ENCODE measurements at regions of chr4 and their contacts with region 1.

Region 1: GRCh38 chr4:55345980-55346850 is at the start of gene SRD5A3:
- DNase-seq: peak; percentile 80 to 85
- ATAC-seq: peak; percentile 89 to 95 (median 89)
- H3K4me3 ChIP-seq: peak within 1 kb of the TSS; percentile 77
- H3K4me3 Mint-ChIP-seq: peak within 1 kb of the TSS; percentile 94
- H3K27ac ChIP-seq: peak within 1 kb of the TSS; percentile 87
- H3K27ac Mint-ChIP-seq: peak within 1 kb of the TSS; percentile 82 to 87
- H3K4me1 ChIP-seq: peaks cover 9% of the 10 kb centered on the region
- H3K4me1 Mint-ChIP-seq: peaks cover 0 to 10% of the 10 kb centered on the region in 2 donors
- H3K27me3 ChIP-seq: no peaks in the 10 kb centered on the region
- H3K27me3 Mint-ChIP-seq: no peaks in the 10 kb centered on the region
- CTCF ChIP-seq: peak; percentile 99
- total RNA-seq, gene SRD5A3: 3.5 to 5.6 (median 4.5) TPM

Region 2: DNA sequence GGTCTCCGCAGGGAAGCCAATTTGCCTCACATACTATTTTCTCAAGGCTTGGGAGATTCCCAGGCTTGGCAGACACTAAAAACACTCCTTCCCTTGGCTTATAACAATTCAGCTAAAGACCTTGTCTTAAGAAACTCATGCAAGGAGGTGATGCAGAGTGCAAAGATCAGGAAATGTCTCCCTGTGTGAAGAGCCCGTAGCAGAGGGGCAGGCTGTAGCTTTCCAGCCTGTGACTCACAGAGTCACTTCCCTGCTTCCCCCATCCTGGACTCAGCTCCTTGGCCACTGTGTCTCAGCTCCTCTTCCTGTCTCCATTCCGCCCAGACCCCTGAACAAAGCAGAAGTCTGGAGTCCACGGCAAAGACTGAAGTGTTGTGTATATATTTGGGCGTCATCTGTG is 277.0 kb before region 1 on chr4:
- intact Hi-C with region 1: no loop called
- DNase-seq: no peak
- ATAC-seq: no peak
- H3K4me3 ChIP-seq: no peak overlapping the region
- H3K4me3 Mint-ChIP-seq: no peak overlapping the region
- H3K27ac ChIP-seq: no peak overlapping the region
- H3K27ac Mint-ChIP-seq: no peak overlapping the region
- H3K4me1 ChIP-seq: no peaks in the 10 kb centered on the region
- H3K4me1 Mint-ChIP-seq: no peaks in the 10 kb centered on the region
- H3K27me3 ChIP-seq: no peaks in the 10 kb centered on the region
- H3K27me3 Mint-ChIP-seq: peaks cover 0 to 3% of the 10 kb centered on the region in 2 donors
- CTCF ChIP-seq: no peak

Region 3: GRCh38 chr4:55395529-55396307 is 49.5 kb after region 1 on chr4 and contains the start of gene TMEM165:
- intact Hi-C with region 1: loop called (anchors 1 kb)
- DNase-seq: peak; percentile 83 to 93
- ATAC-seq: peak; percentile 86 to 93 (median 90)
- H3K4me3 ChIP-seq: peak within 1 kb of the TSS; percentile 71
- H3K4me3 Mint-ChIP-seq: peak within 1 kb of the TSS; percentile 97
- H3K27ac ChIP-seq: peak within 1 kb of the TSS; percentile 92
- H3K27ac Mint-ChIP-seq: peak within 1 kb of the TSS; percentile 95 to 97
- H3K4me1 ChIP-seq: peaks cover 23% of the 10 kb centered on the region
- H3K4me1 Mint-ChIP-seq: peaks cover 39% of the 10 kb centered on the region in 2 donors
- H3K27me3 ChIP-seq: no peaks in the 10 kb centered on the region
- H3K27me3 Mint-ChIP-seq: no peaks in the 10 kb centered on the region
- CTCF ChIP-seq: no peak
- total RNA-seq, gene TMEM165: 86.9 to 113 (median 102) TPM

Region 4: GRCh38 chr4:55736605-55737183 is 390.5 kb after region 1 on chr4:
- intact Hi-C with region 1: loop called (anchors 10 kb)
- DNase-seq: peak in 1 of 2 donors; percentile 24
- ATAC-seq: no peak
- H3K4me3 ChIP-seq: no peak overlapping the region
- H3K4me3 Mint-ChIP-seq: no peak overlapping the region
- H3K27ac ChIP-seq: no peak overlapping the region
- H3K27ac Mint-ChIP-seq: no peak overlapping the region
- H3K4me1 ChIP-seq: no peaks in the 10 kb centered on the region
- H3K4me1 Mint-ChIP-seq: no peaks in the 10 kb centered on the region
- H3K27me3 ChIP-seq: no peaks in the 10 kb centered on the region
- H3K27me3 Mint-ChIP-seq: peaks cover 21 to 60% of the 10 kb centered on the region in 2 donors
- CTCF ChIP-seq: peak; percentile 5

Region 5: DNA sequence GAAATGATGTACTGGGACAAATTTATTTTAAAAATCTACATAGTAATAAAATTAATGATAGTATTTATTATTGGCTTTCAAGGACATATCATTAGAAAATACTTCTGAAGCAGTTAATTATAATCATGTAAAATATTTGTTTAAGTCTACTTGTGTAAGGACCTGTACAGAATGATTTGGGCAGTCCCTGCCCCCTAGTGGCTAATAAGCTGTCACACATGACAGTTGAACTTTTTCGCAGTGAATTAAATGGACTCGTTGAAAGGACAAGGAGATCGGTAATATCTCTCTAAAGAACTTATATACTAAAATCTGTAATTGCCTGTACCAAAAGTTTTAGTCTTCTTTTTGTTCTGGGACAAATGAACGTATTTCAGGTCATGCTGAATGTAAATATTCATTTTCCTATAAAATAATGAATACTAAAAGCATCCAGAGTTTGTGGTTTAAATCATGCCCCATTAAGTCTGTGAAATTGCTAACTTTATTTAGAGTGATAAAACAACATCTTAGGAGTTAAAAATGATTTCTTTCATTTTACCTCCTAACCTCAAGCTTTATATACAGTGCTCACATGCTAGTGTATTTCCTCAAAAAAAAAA is 520.9 kb after region 1 on chr4:
- intact Hi-C with region 1: loop called (anchors 5 kb)
- DNase-seq: peak in 1 of 2 donors; percentile 73
- ATAC-seq: peak; percentile 87 to 93 (median 88)
- H3K4me3 ChIP-seq: no peak overlapping the region
- H3K4me3 Mint-ChIP-seq: no peak overlapping the region
- H3K27ac ChIP-seq: no peak overlapping the region
- H3K27ac Mint-ChIP-seq: peak overlapping the region; percentile 45 to 83
- H3K4me1 ChIP-seq: no peaks in the 10 kb centered on the region
- H3K4me1 Mint-ChIP-seq: peaks cover 10 to 11% of the 10 kb centered on the region in 2 donors
- H3K27me3 ChIP-seq: no peaks in the 10 kb centered on the region
- H3K27me3 Mint-ChIP-seq: no peaks in the 10 kb centered on the region
- CTCF ChIP-seq: peak; percentile 91

Measured in natural killer cell (primary cell).